Activated CD4-positive, alpha-beta T cell treated with anti-CD3 and anti-CD28 coated beads for 36 hours (primary cell): ENCODE measurements at regions of chr5 and their contacts with region 1.

Region 1: DNA sequence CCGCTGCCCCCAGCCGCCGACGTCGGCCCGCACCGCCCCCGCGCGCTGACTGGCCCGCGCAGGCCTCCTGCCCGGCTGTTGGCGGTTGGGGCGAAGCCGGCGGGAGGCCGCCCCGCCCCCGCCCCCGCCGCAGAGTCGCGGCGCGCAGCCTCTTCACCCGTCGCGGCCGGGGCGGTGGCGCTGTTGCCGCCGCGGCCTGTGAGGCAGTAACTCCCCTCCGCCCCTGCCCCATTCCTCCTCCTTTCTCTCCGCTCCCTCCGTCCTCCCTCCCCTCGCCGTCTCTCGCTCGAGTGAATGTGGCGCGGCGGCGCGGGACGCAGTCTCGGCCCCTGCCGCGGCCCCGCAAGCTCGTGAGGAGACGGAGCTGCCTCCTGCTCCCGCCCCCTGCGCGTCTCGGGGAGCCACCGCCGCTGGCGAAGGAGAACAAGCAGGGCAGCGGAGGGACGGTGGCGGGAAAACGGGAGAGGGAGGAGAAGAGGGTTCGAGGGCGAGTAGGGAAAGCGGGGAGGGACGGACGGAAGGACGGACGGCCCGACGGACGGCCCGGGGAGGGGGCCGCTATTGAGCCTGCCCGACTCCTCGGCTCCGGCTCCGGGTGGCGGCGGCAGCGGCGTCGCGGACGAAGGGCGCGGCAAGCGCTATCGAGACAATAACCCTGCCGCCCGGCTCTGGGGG is 637 bp upstream of the ERBIN start:
- DNase-seq: peak; percentile 84
- ATAC-seq: peak; percentile 65
- H3K4me3 Mint-ChIP-seq: peak overlapping the region; percentile 85
- H3K27ac Mint-ChIP-seq: peak overlapping the region; percentile 87
- H3K4me1 Mint-ChIP-seq: peaks cover 28% of the 10 kb centered on the region
- H3K27me3 Mint-ChIP-seq: no peaks in the 10 kb centered on the region

Region 2: GRCh38 chr5:65624571-65625555 is 300.9 kb before region 1 on chr5 and contains the starts of genes SHLD3 and TRAPPC13:
- CTCF ChIA-PET with region 1: no interaction called
- POLR2A ChIA-PET with region 1: no interaction called
- intact Hi-C with region 1: loop called (anchors 1 to 5 kb)
- DNase-seq: peak; percentile 88
- ATAC-seq: peak; percentile 78
- H3K4me3 Mint-ChIP-seq: peak within 1 kb of the TSS; percentile 85
- H3K27ac Mint-ChIP-seq: peak within 1 kb of the TSS; percentile 96
- H3K4me1 Mint-ChIP-seq: peaks cover 44% of the 10 kb centered on the region
- H3K27me3 Mint-ChIP-seq: no peaks in the 10 kb centered on the region
- total RNA-seq, gene SHLD3: 3.5 to 4.0 TPM
- total RNA-seq, gene TRAPPC13: 11.2 to 20.7 TPM

Region 3: DNA sequence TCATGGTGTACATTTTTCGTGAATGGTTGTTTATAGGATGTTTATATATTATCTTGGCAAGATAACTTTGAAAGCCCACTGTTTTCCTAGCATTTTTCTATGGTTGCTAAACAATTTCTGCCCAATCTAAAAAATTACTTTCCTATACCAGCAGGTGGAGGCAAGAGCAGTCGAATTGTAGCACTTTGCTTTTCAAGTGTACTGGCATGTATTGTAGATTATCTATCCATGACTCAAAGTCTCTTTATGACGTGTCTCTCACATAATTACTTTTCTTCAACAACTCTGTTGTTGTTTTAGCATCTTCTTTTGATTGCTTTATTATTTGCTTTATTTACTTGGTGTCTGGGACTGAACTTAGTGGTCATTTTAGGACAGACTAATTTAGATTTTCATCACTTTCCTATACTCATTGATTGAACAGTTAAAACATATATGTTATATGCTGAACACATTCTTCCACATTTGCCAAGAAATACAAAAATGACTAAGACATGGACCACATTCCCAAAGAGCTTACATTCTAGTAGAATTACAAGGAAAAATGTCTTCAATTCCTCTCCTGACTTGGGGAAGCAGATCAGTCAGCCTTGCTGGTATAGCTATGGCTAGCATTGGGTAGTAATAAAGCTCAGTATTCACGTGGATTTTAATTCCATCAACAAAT is 183.0 kb before region 1 on chr5:
- CTCF ChIA-PET with region 1: interaction called, 3 read pairs
- POLR2A ChIA-PET with region 1: no interaction called
- intact Hi-C with region 1: loop called (anchors 1 to 5 kb)
- DNase-seq: peak; percentile 47
- ATAC-seq: peak; percentile 95
- H3K4me3 Mint-ChIP-seq: no peak overlapping the region
- H3K27ac Mint-ChIP-seq: no peak overlapping the region
- H3K4me1 Mint-ChIP-seq: peaks cover 15% of the 10 kb centered on the region
- H3K27me3 Mint-ChIP-seq: no peaks in the 10 kb centered on the region

Region 4: DNA sequence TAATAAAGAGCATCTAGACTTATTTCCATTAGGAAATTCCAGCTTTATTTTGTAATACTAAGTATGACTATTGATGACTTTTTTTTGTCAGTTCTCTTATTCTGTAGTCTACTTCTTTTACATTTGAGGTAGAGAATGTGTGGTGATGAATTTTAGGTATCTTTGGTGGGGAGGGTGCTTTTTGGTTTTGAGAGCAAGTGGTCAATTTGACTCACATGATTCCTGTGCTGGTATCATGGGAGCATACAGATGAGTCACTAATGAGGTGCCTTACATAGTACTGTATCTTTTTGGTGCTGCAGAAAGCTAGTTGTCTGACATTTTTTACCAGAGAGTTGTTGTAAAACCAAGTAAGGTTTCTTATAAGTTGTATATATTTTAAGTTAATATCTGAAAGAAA is 35.9 kb after region 1 on chr5:
- CTCF ChIA-PET with region 1: interaction called, 3 read pairs
- POLR2A ChIA-PET with region 1: no interaction called
- intact Hi-C with region 1: loop called (anchors 1 to 5 kb)
- DNase-seq: peak; percentile 28
- ATAC-seq: peak; percentile 95
- H3K4me3 Mint-ChIP-seq: no peak overlapping the region
- H3K27ac Mint-ChIP-seq: peak overlapping the region; percentile 68
- H3K4me1 Mint-ChIP-seq: peaks cover 64% of the 10 kb centered on the region
- H3K27me3 Mint-ChIP-seq: no peaks in the 10 kb centered on the region

Region 5: DNA sequence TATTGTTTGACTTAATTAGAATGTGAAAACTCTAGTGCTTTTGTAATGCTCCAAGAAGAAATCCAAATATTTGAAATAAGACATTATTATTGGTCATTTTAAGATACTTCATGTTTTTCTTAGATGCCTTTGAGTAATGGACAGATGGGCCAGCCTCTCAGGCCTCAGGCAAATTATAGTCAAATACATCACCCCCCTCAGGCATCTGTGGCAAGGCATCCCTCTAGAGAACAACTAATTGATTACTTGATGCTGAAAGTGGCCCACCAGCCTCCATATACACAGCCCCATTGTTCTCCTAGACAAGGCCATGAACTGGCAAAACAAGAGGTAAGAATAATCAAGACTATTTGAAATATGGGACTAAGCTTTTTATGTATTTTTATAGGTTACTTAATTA is 149.2 kb after region 1 on chr5:
- CTCF ChIA-PET with region 1: no interaction called
- POLR2A ChIA-PET with region 1: no interaction called
- intact Hi-C with region 1: loop called in 1 of 2 experiments (anchors 5 kb)
- DNase-seq: no peak
- ATAC-seq: no peak
- H3K4me3 Mint-ChIP-seq: no peak overlapping the region
- H3K27ac Mint-ChIP-seq: no peak overlapping the region
- H3K4me1 Mint-ChIP-seq: peaks cover 9% of the 10 kb centered on the region
- H3K27me3 Mint-ChIP-seq: no peaks in the 10 kb centered on the region

Region 6: GRCh38 chr5:66089384-66089783 is 163.6 kb after region 1 on chr5:
- CTCF ChIA-PET with region 1: no interaction called
- POLR2A ChIA-PET with region 1: no interaction called
- intact Hi-C with region 1: no loop called
- DNase-seq: no peak
- ATAC-seq: no peak
- H3K4me3 Mint-ChIP-seq: no peak overlapping the region
- H3K27ac Mint-ChIP-seq: no peak overlapping the region
- H3K4me1 Mint-ChIP-seq: no peaks in the 10 kb centered on the region
- H3K27me3 Mint-ChIP-seq: no peaks in the 10 kb centered on the region

Region 7: DNA sequence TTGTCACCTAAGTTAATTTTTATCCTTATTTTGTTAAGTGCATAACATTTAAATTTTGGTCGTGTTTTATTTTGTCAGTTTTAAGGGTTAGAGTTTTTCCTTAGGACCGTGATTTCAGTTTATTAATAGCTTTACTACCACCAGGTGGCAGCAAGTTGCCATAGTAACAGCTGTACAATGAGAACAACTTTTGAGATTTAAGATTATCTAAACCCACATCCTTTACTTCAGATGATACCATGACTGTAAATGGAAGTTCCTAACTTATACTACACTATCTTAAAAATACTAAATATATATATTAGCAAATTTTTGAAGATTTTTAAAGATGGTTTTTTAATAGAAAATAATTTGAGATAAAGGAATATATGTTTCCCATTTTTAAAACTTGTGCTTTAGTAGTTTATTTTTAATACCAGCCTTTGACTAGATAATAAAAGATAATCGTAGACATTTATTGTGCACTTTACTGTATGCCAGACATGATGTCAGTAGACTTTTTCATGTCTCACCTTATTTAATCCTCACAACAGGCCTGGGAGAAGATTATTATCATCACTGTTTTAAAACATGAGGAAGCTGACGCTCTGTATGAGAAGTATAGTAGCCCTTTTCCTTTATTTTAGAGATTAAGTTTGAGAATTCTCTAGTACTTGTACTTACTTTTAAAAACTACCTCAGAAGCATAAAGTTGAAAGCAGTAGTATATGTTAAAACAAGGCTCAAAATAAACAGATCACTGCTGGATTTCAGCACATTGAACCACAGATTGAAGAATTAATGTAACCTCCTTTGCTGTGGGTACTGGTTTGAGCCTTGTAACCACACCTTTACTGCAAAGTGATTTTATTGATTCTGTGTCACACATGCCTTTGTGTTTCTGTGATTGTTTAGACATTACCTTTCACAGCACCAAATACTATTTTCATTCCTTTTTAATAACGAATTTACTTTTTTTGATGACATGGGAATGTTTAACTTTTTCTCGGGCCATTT is 245.9 kb after region 1 on chr5:
- CTCF ChIA-PET with region 1: no interaction called
- POLR2A ChIA-PET with region 1: no interaction called
- intact Hi-C with region 1: no loop called
- DNase-seq: peak; percentile 61
- ATAC-seq: peak; percentile 56
- H3K4me3 Mint-ChIP-seq: no peak overlapping the region
- H3K27ac Mint-ChIP-seq: no peak overlapping the region
- H3K4me1 Mint-ChIP-seq: peaks cover 28% of the 10 kb centered on the region
- H3K27me3 Mint-ChIP-seq: no peaks in the 10 kb centered on the region

Region 8: DNA sequence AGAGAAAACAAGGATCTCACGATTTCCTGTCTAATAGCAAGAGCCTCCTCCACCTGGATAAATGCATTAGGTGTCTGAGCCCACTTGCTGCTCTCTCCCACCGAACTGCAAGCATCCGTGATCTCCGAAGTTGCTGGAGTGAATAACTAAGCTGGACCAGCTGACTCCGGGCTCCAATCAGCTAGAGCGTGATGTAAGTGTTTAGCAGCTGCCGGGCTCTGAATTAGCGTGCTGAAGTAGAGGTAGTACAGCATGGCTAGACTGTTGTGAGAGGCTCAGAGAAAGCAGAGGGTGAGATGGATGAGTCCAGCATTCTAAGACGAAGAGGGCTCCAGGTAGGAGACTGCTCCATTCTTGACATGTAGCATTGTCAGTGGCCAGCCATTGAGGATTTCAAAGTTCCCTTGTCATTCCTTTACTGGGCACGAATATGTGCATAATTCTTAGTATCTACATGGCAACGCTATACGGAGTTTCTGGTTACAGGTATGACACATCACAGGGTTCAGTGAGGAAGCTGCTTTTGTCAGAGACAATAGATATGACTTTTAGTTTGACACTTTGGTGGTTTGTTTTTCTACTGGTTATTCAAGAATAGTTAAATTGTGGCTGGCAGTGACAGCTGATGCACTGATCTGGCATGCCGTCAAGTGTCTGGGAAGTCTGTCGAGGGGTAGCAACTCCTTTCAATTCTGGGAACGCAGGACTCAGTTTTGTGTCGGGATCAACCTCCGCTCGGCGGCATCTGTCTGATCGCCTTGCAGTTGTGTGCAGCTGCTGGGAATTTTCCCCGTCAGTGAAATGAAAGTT is 903.0 kb after region 1 on chr5:
- CTCF ChIA-PET with region 1: no interaction called
- POLR2A ChIA-PET with region 1: no interaction called
- intact Hi-C with region 1: loop called in 1 of 2 experiments (anchors 10 kb)
- DNase-seq: peak; percentile 82
- ATAC-seq: peak; percentile 93
- H3K4me3 Mint-ChIP-seq: peak overlapping the region; percentile 82
- H3K27ac Mint-ChIP-seq: peak overlapping the region; percentile 83
- H3K4me1 Mint-ChIP-seq: peaks cover 25% of the 10 kb centered on the region
- H3K27me3 Mint-ChIP-seq: peaks cover 27% of the 10 kb centered on the region

Region 9: GRCh38 chr5:67015541-67016191 is 1089.9 kb after region 1 on chr5:
- CTCF ChIA-PET with region 1: no interaction called
- POLR2A ChIA-PET with region 1: no interaction called
- intact Hi-C with region 1: no loop called
- DNase-seq: no peak
- ATAC-seq: no peak
- H3K4me3 Mint-ChIP-seq: no peak overlapping the region
- H3K27ac Mint-ChIP-seq: no peak overlapping the region
- H3K4me1 Mint-ChIP-seq: peaks cover 68% of the 10 kb centered on the region
- H3K27me3 Mint-ChIP-seq: no peaks in the 10 kb centered on the region